Heart right ventricle (tissue), 16 donors: ENCODE measurements at regions of chr16 and their contacts with region 1.

Region 1: DNA sequence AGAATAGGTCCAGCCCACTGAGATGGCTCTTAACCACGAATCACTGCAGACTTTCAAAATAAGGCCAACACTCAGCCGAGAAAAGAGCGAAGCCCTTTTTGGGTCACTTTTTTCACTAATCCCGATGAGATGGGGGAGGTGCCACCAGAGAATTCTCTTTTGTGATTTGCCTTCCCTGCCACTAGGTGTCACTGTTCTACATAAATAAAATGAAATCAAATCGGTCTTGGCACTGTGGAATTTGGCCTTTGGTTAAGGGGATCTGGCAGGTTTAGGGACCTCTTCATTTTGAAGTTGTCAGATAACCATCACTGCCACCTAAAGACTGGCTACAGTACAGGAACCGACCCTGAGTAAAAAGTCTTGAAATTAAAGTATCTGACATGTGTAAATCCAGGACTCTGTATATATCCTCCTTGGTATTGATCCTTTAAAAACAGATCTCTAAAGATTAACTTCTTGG is 147.0 kb downstream of the HS3ST4 start:
- DNase-seq: peak in 1 of 2 donors; percentile 10
- ATAC-seq: peak in 4 of 8 donors; percentile 33 to 61 (median 56)
- H3K4me3 ChIP-seq: no peak overlapping the region
- H3K27ac ChIP-seq: no peak overlapping the region
- H3K4me1 ChIP-seq: peaks cover 0 to 7% (median 0%) of the 10 kb centered on the region in 9 donors
- H3K27me3 ChIP-seq: peaks cover 0 to 43% (median 21%) of the 10 kb centered on the region in 7 donors
- CTCF ChIP-seq: peak; percentile 58 to 82 (median 76)

Region 2: DNA sequence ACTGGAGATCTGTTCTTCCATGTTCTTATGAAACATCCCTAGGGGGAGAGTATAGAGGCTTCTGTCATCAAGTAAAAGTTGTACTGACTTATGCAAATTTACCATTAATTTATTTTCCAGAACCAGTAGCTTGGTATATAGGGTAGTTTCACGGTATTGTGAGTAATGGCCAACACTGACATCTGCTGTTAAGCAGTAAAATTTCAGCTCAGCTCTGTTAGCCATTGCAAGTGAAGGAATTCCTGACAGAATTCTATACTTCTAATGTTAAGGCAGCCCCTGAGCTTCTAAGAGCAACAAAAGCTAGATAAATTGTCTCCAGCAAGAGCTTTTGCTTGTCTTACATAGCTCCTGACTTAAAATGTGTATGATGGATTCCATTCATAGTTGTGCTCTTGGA is 614.5 kb after region 1 on chr16:
- intact Hi-C with region 1: loop called in 1 of 10 experiments (anchors 5 kb)
- DNase-seq: no peak
- ATAC-seq: no peak
- H3K4me3 ChIP-seq: no peak overlapping the region
- H3K27ac ChIP-seq: no peak overlapping the region
- H3K4me1 ChIP-seq: no peaks in the 10 kb centered on the region
- H3K27me3 ChIP-seq: no peaks in the 10 kb centered on the region
- CTCF ChIP-seq: peak in 1 of 9 donors; percentile 20

Region 3: GRCh38 chr16:27109666-27110523 is 1271.1 kb after region 1 on chr16:
- intact Hi-C with region 1: loop called in 6 of 10 experiments (anchors 5 kb)
- DNase-seq: peak; percentile 82 to 88
- ATAC-seq: peak; percentile 86 to 95 (median 94)
- H3K4me3 ChIP-seq: peak overlapping the region in 9 of 10 donors; percentile 16 to 45 (median 32)
- H3K27ac ChIP-seq: peak overlapping the region; percentile 26 to 71 (median 58)
- H3K4me1 ChIP-seq: peaks cover 0 to 12% (median 8%) of the 10 kb centered on the region in 9 donors
- H3K27me3 ChIP-seq: peaks cover 0 to 42% (median 11%) of the 10 kb centered on the region in 7 donors
- CTCF ChIP-seq: peak; percentile 81 to 99 (median 92)

Region 4: GRCh38 chr16:27374804-27375425 is 1536.2 kb after region 1 on chr16:
- intact Hi-C with region 1: loop called in 2 of 10 experiments (anchors 5 to 10 kb)
- DNase-seq: peak; percentile 59 to 63
- ATAC-seq: peak; percentile 69 to 90 (median 86)
- H3K4me3 ChIP-seq: peak overlapping the region in 2 of 10 donors; percentile 8 to 36
- H3K27ac ChIP-seq: peak overlapping the region in 3 of 10 donors; percentile 0 to 81 (median 0)
- H3K4me1 ChIP-seq: peaks cover 0 to 66% (median 0%) of the 10 kb centered on the region in 9 donors
- H3K27me3 ChIP-seq: no peaks in the 10 kb centered on the region
- CTCF ChIP-seq: peak; percentile 15 to 60 (median 41)

Region 5: GRCh38 chr16:27455700-27456099 is 1616.9 kb after region 1 on chr16:
- intact Hi-C with region 1: loop called in 3 of 10 experiments (anchors 5 kb)
- DNase-seq: no peak
- ATAC-seq: peak in 7 of 8 donors; percentile 4 to 79 (median 26)
- H3K4me3 ChIP-seq: no peak overlapping the region
- H3K27ac ChIP-seq: peak overlapping the region in 1 of 10 donors; percentile 40
- H3K4me1 ChIP-seq: peaks cover 1 to 35% (median 25%) of the 10 kb centered on the region in 9 donors
- H3K27me3 ChIP-seq: peaks cover 0 to 11% (median 5%) of the 10 kb centered on the region in 7 donors
- CTCF ChIP-seq: no peak